Astrocyte of the cerebellum (primary cell): ENCODE measurements at regions of chr2 and their contacts with region 1.

Region 1: DNA sequence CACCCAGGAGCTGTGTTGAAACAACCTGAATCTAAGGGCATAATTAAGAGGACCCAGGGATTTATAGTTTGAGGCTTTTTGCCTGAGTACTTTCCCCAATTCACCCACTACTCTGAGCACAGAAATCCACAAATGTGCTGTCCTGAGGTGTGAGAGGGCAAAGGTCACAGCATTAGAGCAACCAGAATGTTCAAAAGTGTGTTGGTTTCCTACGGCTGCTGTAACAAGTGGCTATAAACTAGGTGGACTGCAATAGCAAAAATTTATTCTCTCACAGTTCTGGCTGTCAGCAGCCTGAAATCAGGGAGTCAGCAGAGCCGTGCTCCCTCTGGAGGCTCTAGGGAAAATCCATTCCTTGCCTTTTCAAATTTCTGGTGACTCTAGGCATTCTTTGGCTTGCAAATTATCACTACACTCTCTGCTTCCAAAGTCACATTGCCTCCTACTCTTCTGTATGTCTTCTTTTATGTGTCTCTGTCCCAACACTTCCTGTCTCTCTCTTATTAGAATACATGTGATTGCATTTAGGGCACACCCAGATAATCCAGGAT is 91.4 kb upstream of the TACR1 start:
- DNase-seq: no peak
- H3K4me3 ChIP-seq: no peak overlapping the region
- CTCF ChIP-seq: peak; percentile 63

Region 2: GRCh38 chr2:75324133-75324532 is 33.5 kb after region 1 on chr2:
- in situ Hi-C with region 1: no loop called
- DNase-seq: no peak
- H3K4me3 ChIP-seq: no peak overlapping the region
- CTCF ChIP-seq: no peak

Region 3: GRCh38 chr2:75356865-75357264 is 66.2 kb after region 1 on chr2:
- in situ Hi-C with region 1: loop called (anchors 10 kb)
- DNase-seq: no peak
- H3K4me3 ChIP-seq: no peak overlapping the region
- CTCF ChIP-seq: no peak